Transverse colon (tissue), 4 donors: ENCODE measurements at regions of chrX and their contacts with region 1.

Region 1: DNA sequence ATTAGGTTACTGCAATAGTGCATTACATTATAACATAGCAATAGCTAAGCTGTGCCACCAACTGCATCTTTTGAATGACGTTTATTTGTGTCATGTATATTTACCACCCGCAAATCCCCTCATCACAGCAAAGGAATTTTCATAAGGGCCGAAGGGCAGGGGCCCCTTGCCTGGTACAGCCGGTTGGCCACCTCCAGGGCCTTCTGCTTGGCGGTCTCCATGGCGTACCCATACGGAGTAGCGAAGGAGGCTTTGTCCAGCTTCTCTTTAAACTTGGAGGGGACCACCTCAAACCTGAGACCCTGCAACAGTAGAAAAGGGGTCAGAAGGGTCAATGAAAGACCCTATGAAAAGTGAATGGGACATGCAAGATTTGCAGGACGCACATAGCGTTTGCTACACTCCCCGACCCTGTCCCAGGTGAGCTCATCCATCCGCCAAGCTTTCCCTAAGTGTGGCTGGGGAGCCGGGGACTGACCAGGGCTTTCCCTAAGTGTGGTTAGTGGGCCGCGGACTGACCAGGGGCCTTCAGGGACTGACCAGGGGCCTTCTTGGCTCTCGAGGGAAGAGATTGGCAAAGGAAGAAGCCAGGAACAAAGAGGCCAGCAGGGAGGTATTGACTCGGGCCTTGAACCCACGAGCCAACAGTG is 10.6 kb downstream of the ASMTL start:
- DNase-seq: no peak
- H3K4me3 ChIP-seq: no peak overlapping the region
- H3K27ac ChIP-seq: no peak overlapping the region
- H3K4me1 ChIP-seq: no peaks in the 10 kb centered on the region
- H3K27me3 ChIP-seq: no peaks in the 10 kb centered on the region
- CTCF ChIP-seq: no peak
- EP300 ChIP-seq: no peak
- POLR2A ChIP-seq: no peak

Region 2: DNA sequence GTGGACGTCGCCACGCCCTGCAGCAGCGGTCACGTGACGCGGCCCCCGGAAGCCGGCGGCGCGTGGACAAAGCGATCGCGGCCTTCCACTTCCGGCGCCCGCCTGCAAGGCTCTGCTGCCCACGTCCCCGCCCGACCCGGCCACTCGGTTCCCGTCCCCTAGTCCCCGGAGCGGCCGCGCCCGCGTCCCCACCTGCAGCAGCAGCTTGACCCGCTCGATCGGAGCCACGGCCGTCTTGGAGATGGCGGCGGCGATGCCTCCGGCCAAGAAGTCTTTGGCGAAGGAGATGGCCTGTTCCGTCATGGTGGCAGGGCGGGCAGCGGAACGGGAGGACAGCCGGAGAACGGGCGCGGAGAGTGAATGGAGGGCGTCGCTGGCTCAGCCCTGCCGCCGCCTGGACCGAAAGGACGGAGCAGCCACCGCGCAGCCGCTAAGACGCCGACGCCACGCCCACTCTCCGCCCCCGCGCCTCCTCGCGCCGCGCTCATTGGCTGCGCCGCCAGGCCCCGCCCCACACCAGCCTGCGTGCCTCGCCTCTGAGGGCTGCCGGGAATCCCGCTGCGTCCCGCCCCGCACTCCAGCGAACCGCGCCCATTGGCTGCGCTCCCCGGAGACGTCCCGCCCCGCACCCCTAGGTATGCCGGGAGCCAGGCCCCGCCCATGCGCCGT is 50.3 kb before region 1 on chrX and contains the start of gene SLC25A6:
- in situ Hi-C with region 1: no loop called
- intact Hi-C with region 1: no loop called
- DNase-seq: peak; percentile 99
- H3K4me3 ChIP-seq: peak within 1 kb of the TSS; percentile 84 to 98 (median 96)
- H3K27ac ChIP-seq: peak within 1 kb of the TSS; percentile 96 to 100 (median 98)
- H3K4me1 ChIP-seq: peaks cover 10 to 43% (median 34%) of the 10 kb centered on the region in 4 donors
- H3K27me3 ChIP-seq: no peaks in the 10 kb centered on the region
- CTCF ChIP-seq: peak in 2 of 5 experiments; percentile 47 to 62
- EP300 ChIP-seq: no peak
- POLR2A ChIP-seq: peak; percentile 94
- total RNA-seq, gene SLC25A6: 473 to 699 (median 574) TPM

Region 3: GRCh38 chrX:1554469-1555210 is 112.5 kb after region 1 on chrX:
- in situ Hi-C with region 1: no loop called
- intact Hi-C with region 1: no loop called
- DNase-seq: no peak
- H3K4me3 ChIP-seq: no peak overlapping the region
- H3K27ac ChIP-seq: peak overlapping the region in 1 of 4 donors; percentile 32
- H3K4me1 ChIP-seq: no peaks in the 10 kb centered on the region
- H3K27me3 ChIP-seq: no peaks in the 10 kb centered on the region
- CTCF ChIP-seq: no peak
- EP300 ChIP-seq: no peak
- POLR2A ChIP-seq: no peak

Region 4: DNA sequence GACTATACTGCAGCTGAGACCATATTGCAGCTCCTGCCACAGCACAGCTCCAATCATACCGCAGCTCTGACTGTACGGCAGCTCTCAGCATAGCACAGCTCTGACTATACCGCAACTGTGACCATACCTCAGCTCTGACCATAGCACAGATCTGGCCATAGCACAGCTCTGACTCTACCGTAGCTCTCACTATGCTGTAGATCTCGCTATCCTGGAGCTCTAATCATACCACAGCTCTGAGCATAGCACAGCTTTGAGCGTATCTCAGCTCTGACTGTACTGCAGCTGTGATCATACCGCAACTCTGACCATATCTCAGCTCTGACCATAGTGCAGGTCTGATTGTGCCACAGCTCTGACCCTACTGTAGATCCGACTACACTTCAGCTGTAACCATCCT is 311.9 kb after region 1 on chrX:
- in situ Hi-C with region 1: no loop called
- intact Hi-C with region 1: no loop called
- DNase-seq: no peak
- H3K4me3 ChIP-seq: no peak overlapping the region
- H3K27ac ChIP-seq: no peak overlapping the region
- H3K4me1 ChIP-seq: no peaks in the 10 kb centered on the region
- H3K27me3 ChIP-seq: no peaks in the 10 kb centered on the region
- CTCF ChIP-seq: no peak
- EP300 ChIP-seq: no peak
- POLR2A ChIP-seq: no peak

Region 5: DNA sequence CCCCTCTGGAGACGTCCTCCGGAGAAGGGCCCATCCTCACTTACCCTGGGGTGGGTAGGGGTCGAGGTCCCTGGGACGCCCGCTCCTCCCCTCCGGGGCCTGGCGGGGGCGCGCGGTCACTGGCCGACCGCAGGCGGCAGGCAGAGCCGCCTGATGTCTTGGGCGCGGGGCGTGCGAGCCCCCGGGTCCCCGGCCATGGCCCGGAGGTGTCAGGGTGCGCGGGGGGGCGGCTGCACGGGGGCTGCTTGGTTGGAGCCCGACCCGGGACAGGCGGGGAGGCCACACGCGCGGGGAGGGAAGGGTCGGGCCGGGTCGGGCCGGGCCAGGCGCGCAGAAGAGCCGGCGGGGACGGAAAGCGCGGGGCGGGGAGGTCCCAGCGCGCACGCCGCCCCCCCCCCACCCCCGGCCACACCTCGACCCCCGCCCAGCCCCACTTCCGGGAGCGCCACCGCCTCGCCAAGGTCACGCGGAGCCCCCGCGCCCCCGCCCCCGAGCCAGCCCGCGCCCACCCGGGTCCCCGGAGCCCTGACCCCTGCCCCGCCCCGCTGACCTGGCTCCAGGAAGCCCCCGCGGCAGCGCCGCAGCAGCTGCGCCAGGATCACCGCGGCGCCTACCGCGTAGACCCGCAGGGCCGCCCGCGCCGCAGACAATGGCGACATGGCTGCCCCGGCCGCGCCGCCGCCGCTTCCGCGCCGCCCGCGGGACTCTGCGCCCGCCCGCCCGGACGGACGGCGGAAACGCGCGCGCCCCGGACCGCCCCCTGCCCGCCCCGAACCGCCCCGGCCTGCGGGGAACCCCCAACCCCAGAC is 1058.3 kb after region 1 on chrX and contains the starts of genes DHRSX and ZBED1:
- in situ Hi-C with region 1: no loop called
- intact Hi-C with region 1: loop called (anchors 10 kb)
- DNase-seq: peak; percentile 48
- H3K4me3 ChIP-seq: peak within 1 kb of the TSS; percentile 70 to 95 (median 93)
- H3K27ac ChIP-seq: peak within 1 kb of the TSS; percentile 91 to 97 (median 96)
- H3K4me1 ChIP-seq: peaks cover 8 to 54% (median 35%) of the 10 kb centered on the region in 4 donors
- H3K27me3 ChIP-seq: no peaks in the 10 kb centered on the region
- CTCF ChIP-seq: no peak
- EP300 ChIP-seq: no peak
- POLR2A ChIP-seq: no peak
- total RNA-seq, gene DHRSX: 27.9 to 39.9 (median 33.9) TPM
- total RNA-seq, gene ZBED1: 44.0 to 94.3 (median 67.1) TPM